Activated CD8-positive, alpha-beta T cell treated with anti-CD3 and anti-CD28 coated beads, Interleukin-2, amount 10 ng/mL, durations not matched to agents 7 days and 5 days (primary cell): ENCODE measurements at regions of chr17 and their contacts with region 1.

Region 1: DNA sequence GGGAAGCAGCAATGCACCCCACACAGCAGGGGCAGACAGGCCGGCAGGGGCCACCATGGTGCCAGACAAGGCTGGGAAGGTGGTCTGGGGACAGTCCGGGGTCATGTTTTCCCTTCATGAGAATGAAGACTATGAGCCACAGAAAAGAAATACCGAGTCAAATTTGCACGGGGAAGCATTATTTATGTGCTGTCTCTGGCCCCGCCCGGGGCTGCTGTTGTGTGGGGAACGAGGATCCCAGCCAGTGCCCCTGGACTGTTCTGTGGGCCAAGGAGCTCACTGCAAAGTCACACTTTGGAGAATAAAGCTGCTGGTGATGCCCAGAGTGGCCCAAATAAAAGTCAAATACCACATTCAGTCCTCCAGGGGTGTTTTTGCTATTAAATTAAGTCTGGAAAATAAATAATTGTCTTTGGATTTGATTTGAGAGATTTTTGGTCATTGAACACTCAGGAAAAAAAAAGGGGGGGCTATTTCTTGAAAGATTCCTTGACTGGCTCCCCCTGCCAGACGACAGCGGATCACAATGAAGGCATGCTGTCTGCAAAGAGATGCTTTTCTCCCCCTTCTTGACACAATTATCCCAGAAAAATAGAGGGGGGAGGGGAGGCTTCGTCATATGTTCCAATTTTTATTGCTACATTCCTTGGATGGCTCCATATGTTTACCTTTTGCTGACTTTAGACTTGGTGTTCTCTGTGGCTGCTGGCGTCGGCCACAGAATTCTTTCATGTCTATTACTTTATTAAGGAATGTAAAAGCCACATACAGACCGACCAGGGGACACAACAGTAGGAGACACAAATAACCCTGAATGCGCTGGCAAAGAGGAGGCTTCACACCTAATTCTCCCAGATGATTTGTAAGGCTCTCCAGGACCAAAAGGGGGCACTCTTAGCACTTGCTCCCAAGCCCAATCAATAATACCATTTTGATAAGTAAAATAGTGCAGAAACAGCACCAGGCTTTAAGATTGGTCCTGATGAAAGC is 27.1 kb upstream of the ANKFN1 start:
- DNase-seq: peak; percentile 22
- ATAC-seq: no peak
- H3K4me3 Mint-ChIP-seq: no peak overlapping the region
- H3K27ac Mint-ChIP-seq: no peak overlapping the region
- H3K4me1 Mint-ChIP-seq: no peaks in the 10 kb centered on the region
- H3K27me3 Mint-ChIP-seq: peaks cover 2% of the 10 kb centered on the region

Region 2: DNA sequence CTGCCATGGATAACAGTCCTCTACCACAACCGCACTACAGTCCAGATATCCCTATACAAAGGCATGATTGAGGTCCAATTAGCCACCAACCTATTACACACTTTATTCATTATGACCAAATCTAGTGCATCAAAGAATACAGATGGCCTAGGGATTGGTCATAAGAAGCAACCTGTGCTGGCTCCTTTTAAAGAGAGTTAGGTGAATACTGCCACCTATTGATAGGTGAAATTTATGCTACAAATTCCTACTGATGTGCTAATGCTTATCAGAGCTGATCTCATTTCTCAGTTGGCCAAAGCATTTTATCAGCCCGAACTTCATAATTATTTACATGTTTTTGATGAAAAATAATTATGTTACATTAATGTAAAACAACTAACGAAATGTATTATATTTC is 193.4 kb after region 1 on chr17:
- CTCF ChIA-PET with region 1: interaction called, 36 read pairs
- POLR2A ChIA-PET with region 1: no interaction called
- DNase-seq: no peak
- ATAC-seq: no peak
- H3K4me3 Mint-ChIP-seq: no peak overlapping the region
- H3K27ac Mint-ChIP-seq: no peak overlapping the region
- H3K4me1 Mint-ChIP-seq: peaks cover 2% of the 10 kb centered on the region
- H3K27me3 Mint-ChIP-seq: peaks cover 9% of the 10 kb centered on the region